ENCODE measurements at regions of chr14 and their contacts with region 1.

Region 1: GRCh38 chr14:47691829-47692228 is 16.4 kb upstream of the MDGA2 start:
- DNase-seq: no peak
- ATAC-seq: no peak
- H3K4me3 ChIP-seq: no peak overlapping the region
- H3K27ac ChIP-seq: no peak overlapping the region
- H3K4me1 ChIP-seq: no peaks in the 10 kb centered on the region
- H3K27me3 ChIP-seq: no peaks in the 10 kb centered on the region
- CTCF ChIP-seq: no peak
- EP300 ChIP-seq: no peak
- POLR2A ChIP-seq: no peak
- RAD21 ChIP-seq: no peak

Region 2: DNA sequence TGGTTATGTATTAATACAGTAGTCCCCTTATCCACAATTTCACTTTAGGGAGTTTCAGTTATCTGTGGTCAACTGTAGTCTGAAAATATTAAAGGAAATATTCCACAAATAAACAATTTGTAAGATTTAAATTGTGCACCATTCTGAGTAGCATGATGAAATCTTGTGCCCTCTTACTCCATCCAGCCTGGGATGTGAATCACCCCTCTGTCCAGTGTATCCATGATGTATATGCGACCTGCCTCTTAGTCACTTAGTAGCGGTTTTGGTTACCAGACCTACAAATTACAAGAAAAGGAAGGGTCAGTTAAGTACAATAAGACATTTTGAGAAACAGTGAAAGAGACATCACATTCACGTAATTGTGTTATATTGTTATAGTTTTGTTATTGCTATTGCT is 23.5 kb after region 1 on chr14:
- CTCF ChIA-PET with region 1: no interaction called
- POLR2A ChIA-PET with region 1: no interaction called
- in situ Hi-C with region 1: no loop called
- intact Hi-C with region 1: loop called (anchors 1 kb)
- DNase-seq: no peak
- ATAC-seq: no peak
- H3K4me3 ChIP-seq: no peak overlapping the region
- H3K27ac ChIP-seq: no peak overlapping the region
- H3K4me1 ChIP-seq: no peaks in the 10 kb centered on the region
- H3K27me3 ChIP-seq: no peaks in the 10 kb centered on the region
- CTCF ChIP-seq: no peak
- EP300 ChIP-seq: no peak
- POLR2A ChIP-seq: no peak
- RAD21 ChIP-seq: no peak

Measured in HepG2 (cell line).